HEK293 (cell line): ENCODE measurements at regions of chr20 and their contacts with region 1.

Region 1: GRCh38 chr20:8722276-8722928 is 346.5 kb upstream of the PLCB4 start:
- H3K4me3 ChIP-seq: no peak overlapping the region
- H3K27ac ChIP-seq: no peak overlapping the region
- H3K4me1 ChIP-seq: no peaks in the 10 kb centered on the region
- CTCF ChIP-seq: peak; percentile 54; the same call in 1 of the 2 replicates

Region 2: GRCh38 chr20:7926767-7927166 is 795.6 kb before region 1 on chr20:
- CTCF ChIA-PET with region 1: interaction called, 23 read pairs
- POLR2A ChIA-PET with region 1: no interaction called
- H3K4me3 ChIP-seq: no peak overlapping the region
- H3K27ac ChIP-seq: no peak overlapping the region
- H3K4me1 ChIP-seq: no peaks in the 10 kb centered on the region
- CTCF ChIP-seq: no peak

Region 3: DNA sequence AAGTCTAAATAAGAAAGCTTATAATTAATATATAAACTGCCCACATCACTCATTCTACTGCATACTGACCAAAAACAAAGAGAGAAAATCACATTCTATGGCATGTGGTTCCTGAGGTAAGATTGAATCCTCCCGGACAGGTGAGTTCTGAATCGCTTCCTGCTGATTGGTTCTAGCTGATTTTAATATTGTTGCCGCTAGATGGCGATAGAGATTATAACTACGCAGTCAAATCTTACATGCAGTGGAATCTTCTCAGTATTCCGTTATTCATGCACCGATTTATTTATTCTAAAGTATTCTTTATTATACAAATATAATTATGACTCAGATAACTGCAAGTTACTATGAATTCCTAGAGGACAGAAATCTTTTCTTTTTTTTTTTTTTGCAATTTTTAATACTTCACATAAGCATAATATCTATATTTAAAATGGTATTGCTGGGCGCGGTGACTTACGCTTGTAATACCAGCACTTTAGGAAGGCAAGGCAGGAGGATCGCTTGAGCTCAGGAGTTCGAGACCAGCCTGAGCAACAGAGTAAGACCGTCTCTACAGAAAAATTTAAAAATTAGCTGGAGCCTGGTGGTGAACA is 678.6 kb before region 1 on chr20:
- CTCF ChIA-PET with region 1: interaction called, 84 read pairs
- POLR2A ChIA-PET with region 1: no interaction called
- H3K4me3 ChIP-seq: no peak overlapping the region
- H3K27ac ChIP-seq: no peak overlapping the region
- H3K4me1 ChIP-seq: no peaks in the 10 kb centered on the region
- CTCF ChIP-seq: peak; percentile 18; the same call in 1 of the 2 replicates

Region 4: GRCh38 chr20:8131598-8132483 is 590.6 kb before region 1 on chr20 and contains the start of gene PLCB1:
- CTCF ChIA-PET with region 1: interaction called, 58 read pairs
- POLR2A ChIA-PET with region 1: no interaction called
- H3K4me3 ChIP-seq: peak within 1 kb of the TSS; percentile 70
- H3K27ac ChIP-seq: peak within 1 kb of the TSS; percentile 84; the same call in 1 of the 2 replicates
- H3K4me1 ChIP-seq: no peaks in the 10 kb centered on the region
- CTCF ChIP-seq: peak; percentile 77

Region 5: GRCh38 chr20:8228315-8228714 is 494.1 kb before region 1 on chr20:
- CTCF ChIA-PET with region 1: no interaction called
- POLR2A ChIA-PET with region 1: no interaction called
- H3K4me3 ChIP-seq: no peak overlapping the region
- H3K27ac ChIP-seq: no peak overlapping the region
- H3K4me1 ChIP-seq: no peaks in the 10 kb centered on the region
- CTCF ChIP-seq: no peak

Region 6: DNA sequence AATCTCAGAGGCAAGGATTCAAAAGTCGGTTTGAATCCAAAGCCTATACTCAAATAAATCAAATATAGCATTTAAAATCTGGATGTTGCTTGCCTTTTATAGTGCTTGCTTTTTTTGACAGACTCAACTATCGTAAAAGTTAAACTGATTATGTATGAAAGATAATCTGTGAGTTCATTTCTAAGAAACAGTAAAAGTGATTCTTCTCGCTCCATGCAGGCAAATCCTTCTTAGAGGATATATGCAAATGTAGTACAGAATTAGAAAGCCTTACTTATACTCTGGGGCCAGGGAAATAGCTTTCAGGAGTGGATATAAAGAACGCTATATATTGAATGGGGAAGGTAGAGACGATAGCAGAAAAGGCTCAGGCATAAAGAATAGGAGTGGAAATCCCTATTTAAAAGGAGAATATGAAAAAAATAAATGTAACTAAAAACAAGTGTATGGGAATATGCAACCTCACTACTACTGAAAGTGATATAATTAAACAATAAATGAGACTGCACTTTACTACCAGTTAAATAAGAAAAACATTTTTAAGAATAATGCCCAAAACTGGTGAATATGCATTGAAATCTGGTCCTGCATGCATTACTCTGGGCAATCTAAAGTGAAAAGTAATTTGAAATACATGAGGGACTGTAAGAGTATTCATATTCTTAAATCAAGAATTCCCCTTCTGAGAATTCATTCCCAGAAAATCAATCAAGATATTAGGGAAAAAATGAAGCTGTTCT is 15.3 kb before region 1 on chr20:
- CTCF ChIA-PET with region 1: interaction called, 12 read pairs
- POLR2A ChIA-PET with region 1: no interaction called
- H3K4me3 ChIP-seq: no peak overlapping the region
- H3K27ac ChIP-seq: no peak overlapping the region
- H3K4me1 ChIP-seq: no peaks in the 10 kb centered on the region
- CTCF ChIP-seq: no peak